PC-9 (cell line): ENCODE measurements at regions of chr15 and their contacts with region 1.

Region 1: GRCh38 chr15:36075333-36075732 is 504.1 kb upstream of the CDIN1 start:
- DNase-seq: no peak
- H3K4me3 ChIP-seq: no peak overlapping the region
- H3K27ac ChIP-seq: no peak overlapping the region
- H3K4me1 ChIP-seq: no peaks in the 10 kb centered on the region
- H3K27me3 ChIP-seq: no peaks in the 10 kb centered on the region
- CTCF ChIP-seq: no peak

Region 2: GRCh38 chr15:35810007-35810406 is 265.3 kb before region 1 on chr15:
- CTCF ChIA-PET with region 1: no interaction called
- POLR2A ChIA-PET with region 1: interaction called, 15 read pairs
- intact Hi-C with region 1: no loop called
- DNase-seq: no peak
- H3K4me3 ChIP-seq: no peak overlapping the region
- H3K27ac ChIP-seq: no peak overlapping the region
- H3K4me1 ChIP-seq: no peaks in the 10 kb centered on the region
- H3K27me3 ChIP-seq: no peaks in the 10 kb centered on the region
- CTCF ChIP-seq: no peak

Region 3: GRCh38 chr15:36004891-36005490 is 70.3 kb before region 1 on chr15:
- CTCF ChIA-PET with region 1: no interaction called
- POLR2A ChIA-PET with region 1: interaction called, 16 read pairs
- intact Hi-C with region 1: no loop called
- DNase-seq: no peak
- H3K4me3 ChIP-seq: no peak overlapping the region
- H3K27ac ChIP-seq: no peak overlapping the region
- H3K4me1 ChIP-seq: no peaks in the 10 kb centered on the region
- H3K27me3 ChIP-seq: no peaks in the 10 kb centered on the region
- CTCF ChIP-seq: no peak

Region 4: DNA sequence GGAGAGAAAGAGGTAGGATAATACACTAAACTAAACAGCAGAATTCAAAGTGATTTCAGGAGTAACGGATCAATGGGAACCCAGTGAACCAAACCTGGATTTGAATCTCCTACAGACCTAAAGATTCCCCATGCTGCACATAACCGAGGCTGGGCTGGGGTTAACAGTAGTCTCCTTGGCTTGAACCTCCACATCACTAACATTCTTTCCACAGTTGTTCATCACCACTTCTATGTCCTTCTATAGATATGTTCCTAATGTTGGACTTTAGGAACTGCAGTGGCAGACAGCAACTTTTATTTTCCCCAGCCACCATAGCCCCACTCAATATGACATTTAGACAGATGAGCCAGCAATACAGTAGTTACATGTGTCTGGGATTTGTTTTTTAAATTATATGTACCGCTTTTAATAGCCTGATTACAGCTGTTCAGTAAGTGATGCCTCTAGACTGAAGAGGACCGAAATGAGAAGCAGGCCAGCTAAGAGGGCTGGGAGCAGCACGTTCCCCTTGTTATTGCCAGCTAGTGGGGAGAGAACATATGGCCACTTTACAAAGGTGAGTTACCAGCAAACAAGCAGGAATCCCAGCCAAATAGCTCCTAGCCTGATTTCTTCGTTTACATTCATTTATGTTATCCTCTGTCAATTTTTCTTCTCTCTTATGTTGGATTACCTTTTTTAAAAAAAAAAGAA is 31.5 kb after region 1 on chr15:
- CTCF ChIA-PET with region 1: no interaction called
- POLR2A ChIA-PET with region 1: no interaction called
- intact Hi-C with region 1: no loop called
- DNase-seq: no peak
- H3K4me3 ChIP-seq: no peak overlapping the region
- H3K27ac ChIP-seq: no peak overlapping the region
- H3K4me1 ChIP-seq: no peaks in the 10 kb centered on the region
- H3K27me3 ChIP-seq: no peaks in the 10 kb centered on the region
- CTCF ChIP-seq: no peak